Activated CD4-positive, alpha-beta T cell treated with anti-CD3 and anti-CD28 coated beads, Interleukin-2, amount 10 ng/mL, durations not matched to agents 24 days and 14 days (primary cell): ENCODE measurements at regions of chr7 and their contacts with region 1.

Region 1: GRCh38 chr7:99623091-99623693 is 6.4 kb downstream of the ZSCAN25 start:
- DNase-seq: peak; percentile 73
- H3K4me3 Mint-ChIP-seq: peak overlapping the region; percentile 91
- H3K27ac Mint-ChIP-seq: peak overlapping the region; percentile 92
- H3K4me1 Mint-ChIP-seq: peaks cover 66% of the 10 kb centered on the region
- H3K27me3 Mint-ChIP-seq: no peaks in the 10 kb centered on the region

Region 2: GRCh38 chr7:99579956-99580777 is 43.0 kb before region 1 on chr7:
- intact Hi-C with region 1: no loop called
- DNase-seq: peak; percentile 78
- H3K4me3 Mint-ChIP-seq: peak overlapping the region; percentile 89
- H3K27ac Mint-ChIP-seq: peak overlapping the region; percentile 49
- H3K4me1 Mint-ChIP-seq: peaks cover 18% of the 10 kb centered on the region
- H3K27me3 Mint-ChIP-seq: peaks cover 3% of the 10 kb centered on the region

Region 3: DNA sequence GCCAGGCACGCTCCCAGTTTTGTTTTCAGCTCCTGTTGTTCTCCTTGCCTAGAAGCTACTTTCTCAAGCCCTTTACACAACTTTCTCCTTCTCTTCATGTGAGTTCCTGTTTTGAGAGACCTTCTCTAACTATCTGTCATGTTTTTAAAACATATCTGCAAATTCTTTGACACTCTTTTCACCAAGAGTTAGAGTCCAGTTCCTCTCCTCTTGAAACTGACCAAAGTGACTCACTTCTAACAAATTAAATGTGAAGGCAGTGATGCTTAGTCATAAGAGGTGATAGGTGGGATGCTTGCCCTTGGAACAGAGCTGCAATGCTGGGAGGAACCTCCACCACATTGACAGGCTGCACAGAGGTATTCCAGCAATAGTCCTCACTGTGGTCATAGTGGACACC is 18.8 kb after region 1 on chr7:
- intact Hi-C with region 1: loop called (anchors 1 kb)
- DNase-seq: no peak
- H3K4me3 Mint-ChIP-seq: no peak overlapping the region
- H3K27ac Mint-ChIP-seq: peak overlapping the region; percentile 21
- H3K4me1 Mint-ChIP-seq: peaks cover 31% of the 10 kb centered on the region
- H3K27me3 Mint-ChIP-seq: no peaks in the 10 kb centered on the region